ENCODE measurements at regions of chr4 and their contacts with region 1.

Region 1: GRCh38 chr4:11428899-11429698 is 405 bp upstream of the HS3ST1 start:
- DNase-seq: peak; percentile 21 to 31
- ATAC-seq: peak; percentile 75 to 82 (median 77)
- H3K4me3 ChIP-seq: peak overlapping the region; percentile 44
- H3K4me3 Mint-ChIP-seq: peak overlapping the region; percentile 75
- H3K27ac ChIP-seq: no peak overlapping the region
- H3K27ac Mint-ChIP-seq: no peak overlapping the region
- H3K4me1 ChIP-seq: peaks cover 24% of the 10 kb centered on the region
- H3K4me1 Mint-ChIP-seq: peaks cover 11 to 24% of the 10 kb centered on the region in 2 donors
- H3K27me3 ChIP-seq: peaks cover 20% of the 10 kb centered on the region
- H3K27me3 Mint-ChIP-seq: peaks cover 31 to 45% of the 10 kb centered on the region in 2 donors
- CTCF ChIP-seq: peak; percentile 19

Region 2: DNA sequence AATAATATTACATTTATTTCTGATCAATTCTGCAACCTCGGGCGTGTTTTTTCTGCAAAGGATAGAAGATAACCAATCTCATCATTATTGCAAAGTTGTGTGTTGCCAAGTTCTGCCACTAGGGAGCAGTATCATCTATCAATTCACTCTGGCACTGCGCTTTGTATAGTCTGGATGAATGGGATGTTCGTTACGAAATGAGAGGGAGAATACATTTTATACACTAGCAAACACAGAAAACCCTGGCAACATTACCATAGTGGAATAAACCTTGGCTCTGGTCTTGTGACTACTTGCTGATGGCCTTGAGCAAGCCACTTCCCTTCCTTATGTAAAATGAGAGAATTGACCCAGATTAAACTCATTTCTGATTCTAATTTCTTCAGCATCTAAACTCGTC is 874.4 kb before region 1 on chr4:
- intact Hi-C with region 1: loop called (anchors 10 kb)
- DNase-seq: peak in 1 of 2 donors; percentile 68
- ATAC-seq: peak; percentile 62 to 77 (median 69)
- H3K4me3 ChIP-seq: no peak overlapping the region
- H3K4me3 Mint-ChIP-seq: no peak overlapping the region
- H3K27ac ChIP-seq: no peak overlapping the region
- H3K27ac Mint-ChIP-seq: no peak overlapping the region
- H3K4me1 ChIP-seq: no peaks in the 10 kb centered on the region
- H3K4me1 Mint-ChIP-seq: peaks cover 8% of the 10 kb centered on the region in 2 donors
- H3K27me3 ChIP-seq: no peaks in the 10 kb centered on the region
- H3K27me3 Mint-ChIP-seq: no peaks in the 10 kb centered on the region
- CTCF ChIP-seq: peak; percentile 84

Region 3: DNA sequence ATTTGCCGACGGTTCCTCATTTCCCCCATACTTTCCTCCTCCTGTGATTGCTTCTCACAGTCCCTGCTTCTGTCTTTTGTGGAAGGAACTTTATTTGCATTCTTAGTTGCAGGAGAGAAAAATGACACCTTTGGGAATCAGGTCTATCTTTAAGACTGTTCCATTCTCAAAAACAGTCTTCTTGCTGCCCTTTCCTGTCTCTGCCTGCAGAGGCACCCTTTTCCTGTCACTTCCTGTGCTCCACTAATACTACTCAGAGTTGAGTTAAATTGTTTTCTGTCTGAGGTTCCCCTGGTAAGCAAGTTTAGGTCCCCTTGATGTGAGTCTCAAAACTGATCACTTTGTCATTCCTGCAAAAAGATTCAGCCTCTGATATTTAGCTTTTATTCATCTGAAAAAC is 535.7 kb before region 1 on chr4:
- intact Hi-C with region 1: loop called (anchors 10 kb)
- DNase-seq: peak in 1 of 2 donors; percentile 20
- ATAC-seq: peak in 1 of 3 donors; percentile 58
- H3K4me3 ChIP-seq: no peak overlapping the region
- H3K4me3 Mint-ChIP-seq: no peak overlapping the region
- H3K27ac ChIP-seq: no peak overlapping the region
- H3K27ac Mint-ChIP-seq: no peak overlapping the region
- H3K4me1 ChIP-seq: no peaks in the 10 kb centered on the region
- H3K4me1 Mint-ChIP-seq: peaks cover 0 to 7% of the 10 kb centered on the region in 2 donors
- H3K27me3 ChIP-seq: no peaks in the 10 kb centered on the region
- H3K27me3 Mint-ChIP-seq: peaks cover 3 to 25% of the 10 kb centered on the region in 2 donors
- CTCF ChIP-seq: peak; percentile 31

Region 4: DNA sequence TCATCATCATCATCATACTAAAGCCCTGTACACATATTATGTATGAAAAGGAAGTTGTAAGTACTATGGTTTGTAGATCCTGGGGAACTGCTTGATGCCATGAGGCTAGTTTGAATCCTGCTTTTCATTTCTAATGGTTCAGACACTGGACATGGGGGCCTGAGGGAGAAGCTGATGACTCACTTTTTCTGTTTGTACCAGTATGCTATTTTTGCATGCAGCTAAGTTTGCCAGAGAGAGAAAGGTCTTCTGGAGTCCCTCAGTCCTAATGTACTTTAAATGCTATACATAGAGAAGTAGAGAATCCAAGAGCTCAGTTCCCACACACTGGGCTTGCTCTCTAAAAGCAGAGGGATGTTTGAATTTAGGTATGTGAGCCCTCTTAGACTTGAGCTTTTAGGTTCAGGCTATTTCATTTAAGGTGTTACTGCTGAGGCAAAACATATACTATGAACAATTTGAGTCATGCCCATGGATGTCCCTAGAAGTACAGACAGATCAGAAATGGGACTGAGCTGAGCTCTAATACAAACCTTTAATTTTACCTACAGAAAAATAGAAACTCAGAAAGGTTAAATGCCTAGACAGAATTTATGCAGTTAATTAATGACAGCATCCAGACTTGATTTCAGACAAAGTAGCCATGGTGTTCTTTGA is 17.2 kb after region 1 on chr4:
- intact Hi-C with region 1: no loop called
- DNase-seq: no peak
- ATAC-seq: no peak
- H3K4me3 ChIP-seq: no peak overlapping the region
- H3K4me3 Mint-ChIP-seq: no peak overlapping the region
- H3K27ac ChIP-seq: no peak overlapping the region
- H3K27ac Mint-ChIP-seq: no peak overlapping the region
- H3K4me1 ChIP-seq: no peaks in the 10 kb centered on the region
- H3K4me1 Mint-ChIP-seq: no peaks in the 10 kb centered on the region
- H3K27me3 ChIP-seq: no peaks in the 10 kb centered on the region
- H3K27me3 Mint-ChIP-seq: peaks cover 7 to 9% of the 10 kb centered on the region in 2 donors
- CTCF ChIP-seq: no peak